Lower leg skin (tissue), 4 donors: ENCODE measurements at regions of chr7 and their contacts with region 1.

Region 1: GRCh38 chr7:13307040-13307439 is 619.6 kb downstream of the ARL4A start:
- DNase-seq: no peak
- H3K4me3 ChIP-seq: no peak overlapping the region
- CTCF ChIP-seq: no peak
- POLR2A ChIP-seq: no peak

Region 2: GRCh38 chr7:13327669-13328068 is 20.6 kb after region 1 on chr7:
- intact Hi-C with region 1: loop called (anchors 1 kb)
- DNase-seq: no peak
- H3K4me3 ChIP-seq: no peak overlapping the region
- CTCF ChIP-seq: no peak
- POLR2A ChIP-seq: no peak